ENCODE measurements at regions of chr14 and their contacts with region 1.

Region 1: DNA sequence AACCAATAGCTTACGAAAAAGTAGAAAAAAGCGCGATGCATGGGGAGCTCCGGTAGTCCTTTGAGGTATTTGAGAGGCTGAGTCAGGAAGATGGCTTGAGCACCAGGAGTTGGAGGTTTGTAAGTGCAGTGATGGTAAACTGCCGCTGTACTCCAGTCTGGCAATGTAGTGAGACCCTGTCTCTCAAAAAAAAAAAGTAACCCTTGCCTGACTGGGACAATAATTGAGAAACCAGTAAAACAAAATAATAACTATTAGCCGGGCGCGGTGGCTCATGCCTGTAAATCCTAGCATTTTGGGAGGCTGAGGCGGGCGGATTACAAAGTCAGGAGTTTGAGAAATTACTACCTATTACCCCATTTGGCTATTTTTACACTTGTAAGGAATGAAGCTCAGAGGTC is 632 bp upstream of the ACOT2 start:
- DNase-seq: peak; percentile 50
- ATAC-seq: peak; percentile 32
- H3K4me3 Mint-ChIP-seq: peak overlapping the region; percentile 95
- H3K27ac Mint-ChIP-seq: peak overlapping the region; percentile 97
- H3K4me1 Mint-ChIP-seq: peaks cover 47% of the 10 kb centered on the region
- H3K27me3 Mint-ChIP-seq: no peaks in the 10 kb centered on the region

Region 2: GRCh38 chr14:73136387-73137225 is 431.8 kb before region 1 on chr14 and contains the start of gene PSEN1:
- CTCF ChIA-PET with region 1: interaction called, 4 read pairs
- POLR2A ChIA-PET with region 1: interaction called, 4 read pairs
- intact Hi-C with region 1: loop called in 1 of 2 experiments (anchors 1 kb)
- DNase-seq: peak; percentile 99
- ATAC-seq: peak; percentile 95
- H3K4me3 Mint-ChIP-seq: peak within 1 kb of the TSS; percentile 86
- H3K27ac Mint-ChIP-seq: peak within 1 kb of the TSS; percentile 82
- H3K4me1 Mint-ChIP-seq: peaks cover 31% of the 10 kb centered on the region
- H3K27me3 Mint-ChIP-seq: no peaks in the 10 kb centered on the region
- total RNA-seq, gene PSEN1: 31.2 to 31.6 TPM

Region 3: DNA sequence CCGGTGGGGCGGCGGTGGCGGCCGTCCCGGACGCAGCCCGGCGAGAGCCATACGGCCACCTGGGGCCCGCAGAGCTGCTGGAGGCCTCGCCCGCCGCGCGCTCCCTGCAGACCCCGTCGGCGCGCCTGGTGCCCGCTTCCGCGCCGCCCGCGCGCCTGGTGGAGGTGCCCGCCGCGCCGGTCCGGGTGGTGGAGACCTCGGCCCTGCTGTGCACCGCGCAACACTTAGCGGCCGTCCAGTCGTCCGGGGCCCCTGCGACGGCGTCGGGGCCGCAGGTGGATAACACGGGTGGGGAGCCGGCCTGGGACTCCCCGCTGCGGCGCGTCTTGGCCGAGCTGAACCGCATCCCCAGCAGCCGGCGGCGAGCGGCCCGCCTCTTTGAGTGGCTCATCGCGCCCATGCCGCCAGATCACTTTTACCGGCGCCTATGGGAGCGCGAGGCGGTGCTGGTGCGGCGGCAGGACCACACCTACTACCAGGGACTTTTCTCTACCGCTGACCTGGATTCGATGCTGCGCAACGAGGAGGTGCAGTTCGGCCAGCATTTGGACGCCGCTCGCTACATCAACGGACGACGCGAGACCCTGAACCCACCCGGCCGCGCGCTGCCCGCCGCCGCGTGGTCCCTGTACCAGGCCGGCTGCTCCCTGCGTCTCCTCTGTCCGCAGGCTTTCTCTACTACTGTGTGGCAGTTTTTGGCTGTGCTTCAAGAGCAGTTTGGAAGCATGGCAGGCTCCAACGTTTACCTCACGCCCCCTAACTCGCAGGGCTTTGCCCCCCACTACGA is 76.9 kb before region 1 on chr14:
- CTCF ChIA-PET with region 1: interaction called, 7 read pairs
- POLR2A ChIA-PET with region 1: interaction called, 4 read pairs
- intact Hi-C with region 1: loop called (anchors 1 kb)
- DNase-seq: peak; percentile 84
- ATAC-seq: peak; percentile 79
- H3K4me3 Mint-ChIP-seq: peak overlapping the region; percentile 81
- H3K27ac Mint-ChIP-seq: peak overlapping the region; percentile 75
- H3K4me1 Mint-ChIP-seq: peaks cover 40% of the 10 kb centered on the region
- H3K27me3 Mint-ChIP-seq: peaks cover 2% of the 10 kb centered on the region

Region 4: DNA sequence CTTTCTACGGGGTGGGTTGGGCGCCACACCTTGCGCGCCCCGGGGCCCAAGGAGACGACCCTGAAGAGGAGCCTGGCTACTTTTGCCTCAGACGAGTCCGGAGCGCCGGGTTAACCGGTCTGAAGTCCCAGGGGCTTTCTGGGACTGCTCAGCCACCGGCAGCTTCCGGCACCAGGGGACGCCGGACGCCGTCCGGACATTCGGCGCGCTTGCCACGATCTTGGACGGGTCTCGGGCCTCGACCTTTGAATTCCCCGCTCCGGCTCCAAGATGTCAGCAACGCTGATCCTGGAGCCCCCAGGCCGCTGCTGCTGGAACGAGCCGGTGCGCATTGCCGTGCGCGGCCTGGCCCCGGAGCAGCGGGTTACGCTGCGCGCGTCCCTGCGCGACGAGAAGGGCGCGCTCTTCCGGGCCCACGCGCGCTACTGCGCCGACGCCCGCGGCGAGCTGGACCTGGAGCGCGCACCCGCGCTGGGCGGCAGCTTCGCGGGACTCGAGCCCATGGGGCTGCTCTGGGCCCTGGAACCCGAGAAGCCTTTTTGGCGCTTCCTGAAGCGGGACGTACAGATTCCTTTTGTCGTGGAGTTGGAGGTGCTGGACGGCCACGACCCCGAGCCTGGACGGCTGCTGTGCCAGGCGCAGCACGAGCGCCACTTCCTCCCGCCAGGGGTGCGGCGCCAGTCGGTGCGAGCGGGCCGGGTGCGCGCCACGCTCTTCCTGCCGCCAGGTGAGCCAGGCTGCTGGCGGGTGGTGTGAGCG is 23.5 kb after region 1 on chr14 and contains the start of gene ACOT4:
- CTCF ChIA-PET with region 1: interaction called, 12 read pairs
- POLR2A ChIA-PET with region 1: interaction called, 5 read pairs
- intact Hi-C with region 1: loop called in 1 of 2 experiments (anchors 2 kb)
- DNase-seq: peak; percentile 69
- ATAC-seq: peak; percentile 85
- H3K4me3 Mint-ChIP-seq: peak within 1 kb of the TSS; percentile 65
- H3K27ac Mint-ChIP-seq: peak within 1 kb of the TSS; percentile 56
- H3K4me1 Mint-ChIP-seq: peaks cover 9% of the 10 kb centered on the region
- H3K27me3 Mint-ChIP-seq: no peaks in the 10 kb centered on the region
- total RNA-seq, gene ACOT4: 3.0 to 3.1 TPM

Region 5: DNA sequence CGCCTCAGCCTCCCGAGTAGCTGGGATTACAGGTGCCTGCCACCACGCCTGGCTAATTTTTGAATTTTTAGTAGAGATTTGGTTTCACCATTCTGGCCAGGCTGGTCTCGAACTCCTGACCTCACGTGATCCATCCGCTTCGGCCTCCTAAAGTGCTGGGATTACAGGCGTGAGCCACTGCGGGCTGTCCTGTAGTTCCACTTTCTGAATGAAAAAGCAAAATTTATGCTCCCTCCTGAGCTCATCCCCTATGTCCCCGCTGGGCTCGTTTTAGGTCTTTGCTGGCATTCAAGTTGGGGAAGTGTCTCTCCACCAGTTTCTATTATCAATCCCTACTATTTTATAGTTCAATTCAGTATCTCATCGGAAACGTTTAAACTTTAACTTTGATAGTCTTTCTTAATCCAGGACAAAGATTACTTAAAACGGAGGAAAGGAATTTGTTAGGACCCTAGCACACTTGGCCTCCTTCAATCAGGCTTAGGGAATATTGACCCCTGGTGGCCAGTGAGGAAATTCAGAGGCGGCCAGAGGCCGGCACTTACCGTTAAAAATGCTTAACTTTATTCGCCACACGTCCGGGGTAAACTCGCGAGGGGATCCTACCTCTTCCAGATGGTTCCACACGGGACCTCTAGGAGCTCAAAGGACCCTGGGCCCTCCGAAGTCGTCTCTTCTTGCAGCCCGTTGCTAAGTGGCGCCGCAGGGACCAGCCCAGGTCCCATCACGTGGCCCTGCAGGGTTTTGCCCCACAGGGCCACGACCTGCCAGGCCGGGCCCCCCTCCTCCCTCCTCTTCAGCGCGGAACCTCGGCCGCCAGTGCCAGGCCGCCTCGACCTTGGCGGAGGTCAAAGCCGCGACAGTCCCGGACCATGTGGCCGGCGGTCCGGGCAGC is 65.0 kb after region 1 on chr14:
- CTCF ChIA-PET with region 1: interaction called, 13 read pairs
- POLR2A ChIA-PET with region 1: no interaction called
- intact Hi-C with region 1: loop called in 1 of 2 experiments (anchors 5 kb)
- DNase-seq: peak; percentile 74
- ATAC-seq: peak; percentile 82
- H3K4me3 Mint-ChIP-seq: peak overlapping the region; percentile 49
- H3K27ac Mint-ChIP-seq: peak overlapping the region; percentile 37
- H3K4me1 Mint-ChIP-seq: peaks cover 5% of the 10 kb centered on the region
- H3K27me3 Mint-ChIP-seq: peaks cover 12% of the 10 kb centered on the region

Region 6: GRCh38 chr14:73696466-73697400 is 128.4 kb after region 1 on chr14:
- CTCF ChIA-PET with region 1: no interaction called
- POLR2A ChIA-PET with region 1: no interaction called
- intact Hi-C with region 1: loop called (anchors 1 kb)
- DNase-seq: no peak
- ATAC-seq: peak; percentile 87
- H3K4me3 Mint-ChIP-seq: peak overlapping the region; percentile 46
- H3K27ac Mint-ChIP-seq: peak overlapping the region; percentile 92
- H3K4me1 Mint-ChIP-seq: peaks cover 50% of the 10 kb centered on the region
- H3K27me3 Mint-ChIP-seq: no peaks in the 10 kb centered on the region

Measured in activated CD4-positive, alpha-beta T cell treated with anti-CD3 and anti-CD28 coated beads for 36 hours (primary cell).